ENCODE measurements at regions of chr17 and their contacts with region 1.

Region 1: GRCh38 chr17:3048767-3049471 is 14.5 kb downstream of the OR1D5 start:
- DNase-seq: peak; percentile 98

Region 2: GRCh38 chr17:2749784-2750181 is 299.1 kb before region 1 on chr17:
- in situ Hi-C with region 1: no loop called
- DNase-seq: peak; percentile 86

Region 3: DNA sequence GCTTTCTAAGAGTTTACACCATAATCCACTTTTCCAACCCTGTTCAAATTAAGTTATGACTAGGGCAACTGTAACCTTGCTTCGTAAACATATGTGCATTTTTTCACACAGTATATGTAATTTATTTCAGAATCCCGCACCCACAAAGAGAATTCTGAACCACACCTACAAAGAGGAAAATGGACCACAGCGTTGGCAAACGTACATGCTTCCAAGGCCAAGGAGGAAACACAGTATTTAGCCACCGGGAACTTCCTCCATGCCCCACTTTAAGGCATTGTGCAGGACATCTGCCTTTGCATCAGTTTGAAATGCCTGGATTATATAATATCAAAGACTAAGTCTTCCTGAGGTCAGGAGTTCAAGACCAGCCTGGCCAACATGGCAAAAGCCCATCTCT is 420.6 kb after region 1 on chr17:
- in situ Hi-C with region 1: no loop called
- DNase-seq: no peak

Region 4: DNA sequence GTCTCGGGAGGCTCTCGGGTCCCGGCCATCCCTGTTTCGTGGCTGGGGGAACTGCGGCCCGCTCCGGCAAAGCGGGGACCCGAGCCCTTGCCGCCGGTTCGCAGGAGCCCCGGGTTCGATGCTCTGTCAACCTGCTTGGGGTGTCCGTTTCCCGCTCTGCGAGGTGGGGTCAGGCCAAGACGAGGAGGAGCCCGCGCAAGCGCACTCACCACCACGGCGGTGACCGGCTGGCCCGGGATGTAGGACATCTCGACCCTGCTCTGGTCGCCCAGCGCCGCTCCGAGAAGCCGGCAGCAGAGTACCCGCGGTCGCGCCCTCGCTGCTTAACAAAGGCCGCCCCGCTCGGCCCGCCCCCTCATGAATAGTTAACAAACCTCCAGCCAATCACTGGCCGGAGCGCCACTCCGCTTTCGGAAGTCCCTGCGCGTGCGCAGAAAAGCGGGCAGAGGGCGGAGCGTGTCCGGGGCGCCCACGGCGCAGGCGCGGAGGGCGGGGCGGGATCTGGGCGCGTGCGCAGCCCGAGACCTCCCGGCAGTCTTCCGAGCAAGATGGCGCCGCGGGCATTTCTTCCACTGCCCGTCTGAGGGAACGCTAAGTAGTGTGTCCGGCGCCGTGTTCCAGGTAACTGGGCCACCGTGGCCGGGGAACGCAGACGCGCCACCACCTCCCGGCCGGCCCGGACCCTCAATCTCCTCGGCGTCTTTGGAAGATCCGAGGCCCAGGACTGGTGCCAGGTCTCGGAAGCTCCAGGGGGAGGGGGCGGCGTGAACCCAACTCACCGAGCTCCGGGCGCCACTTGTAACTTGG is 619.6 kb after region 1 on chr17 and contains the starts of genes EMC6 and TAX1BP3:
- in situ Hi-C with region 1: loop called (anchors 25 kb)
- DNase-seq: peak; percentile 98